Activated T-helper 2 cell treated with anti-CD3 and anti-CD28 coated beads, Interferon-gamma antibody, Interleukin-2, Interleukin-4, amounts not matched to agents 10 μg/mL and 5 μg/mL and 100 μg/mL, durations not matched to agents 14 hours and 24 hours and 36 hours (primary cell): ENCODE measurements at regions of chr19 and their contacts with region 1.

Region 1: GRCh38 chr19:17555480-17555928 is at the start of gene COLGALT1:
- DNase-seq: peak; percentile 96
- H3K4me3 Mint-ChIP-seq: peak within 1 kb of the TSS; percentile 88
- H3K27ac Mint-ChIP-seq: peak within 1 kb of the TSS; percentile 85
- H3K4me1 Mint-ChIP-seq: peaks cover 10% of the 10 kb centered on the region
- H3K27me3 Mint-ChIP-seq: no peaks in the 10 kb centered on the region
- total RNA-seq, gene COLGALT1: 77.0 and 84.3 TPM in 2 replicates

Region 2: GRCh38 chr19:17125715-17126677 is 429.5 kb before region 1 on chr19:
- intact Hi-C with region 1: loop called (anchors 5 kb)
- DNase-seq: peak; percentile 77
- H3K4me3 Mint-ChIP-seq: peak overlapping the region; percentile 83
- H3K27ac Mint-ChIP-seq: peak overlapping the region; percentile 99
- H3K4me1 Mint-ChIP-seq: peaks cover 37% of the 10 kb centered on the region
- H3K27me3 Mint-ChIP-seq: no peaks in the 10 kb centered on the region

Region 3: DNA sequence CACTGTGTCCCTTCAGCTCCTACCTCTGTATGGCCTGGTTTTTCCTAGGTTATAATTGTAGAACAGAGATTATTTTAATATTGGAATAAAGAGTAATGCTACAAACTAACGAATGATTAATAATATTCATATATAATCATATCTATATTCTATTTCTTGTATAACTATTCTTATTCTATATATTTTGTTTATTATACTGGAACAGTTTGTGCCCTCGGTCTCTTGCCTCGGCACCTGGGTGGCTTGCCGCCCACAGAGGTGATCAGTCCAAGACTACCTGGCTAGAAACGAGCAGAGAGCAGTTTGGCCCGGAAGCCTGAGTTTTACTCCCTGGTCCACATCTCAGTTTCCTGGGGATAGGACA is 89.0 kb before region 1 on chr19:
- intact Hi-C with region 1: no loop called
- DNase-seq: no peak
- H3K4me3 Mint-ChIP-seq: no peak overlapping the region
- H3K27ac Mint-ChIP-seq: no peak overlapping the region
- H3K4me1 Mint-ChIP-seq: peaks cover 15% of the 10 kb centered on the region
- H3K27me3 Mint-ChIP-seq: peaks cover 6% of the 10 kb centered on the region

Region 4: DNA sequence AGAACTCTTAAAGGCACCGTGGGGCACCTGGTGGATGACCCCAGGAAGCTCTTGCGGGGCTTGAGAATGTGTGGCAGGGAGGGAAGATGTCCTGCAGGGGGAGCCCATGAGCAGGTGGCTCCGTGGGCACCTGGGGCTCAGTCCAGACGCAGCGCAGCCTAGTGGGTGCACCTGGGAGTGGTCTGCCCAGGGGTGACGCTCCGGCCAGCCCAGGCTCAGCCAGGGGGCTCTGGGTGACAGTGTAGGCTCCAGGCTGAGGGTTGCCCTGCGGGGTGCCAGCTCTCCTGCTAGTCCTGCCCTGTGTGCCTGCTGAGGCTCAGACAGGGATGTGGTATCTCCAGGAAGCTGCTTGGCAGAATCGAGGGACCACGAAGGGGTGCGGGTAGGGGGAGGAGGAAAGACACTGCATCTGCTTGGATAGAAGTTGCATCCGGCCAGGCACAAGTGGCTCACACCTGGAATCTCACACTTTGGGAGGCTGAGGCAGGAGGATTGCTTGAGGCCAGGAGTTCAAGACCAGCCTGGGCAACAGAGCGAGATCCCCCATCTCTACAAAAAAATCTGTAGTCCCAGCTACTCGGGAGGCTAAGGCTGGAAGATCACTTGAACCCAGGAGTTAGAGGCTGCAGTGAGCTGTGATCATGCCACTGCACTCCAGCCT is 59.0 kb before region 1 on chr19:
- intact Hi-C with region 1: loop called (anchors 10 kb)
- DNase-seq: peak; percentile 74
- H3K4me3 Mint-ChIP-seq: no peak overlapping the region
- H3K27ac Mint-ChIP-seq: no peak overlapping the region
- H3K4me1 Mint-ChIP-seq: peaks cover 14% of the 10 kb centered on the region
- H3K27me3 Mint-ChIP-seq: no peaks in the 10 kb centered on the region

Region 5: GRCh38 chr19:17511724-17512573 is 43.6 kb before region 1 on chr19:
- intact Hi-C with region 1: loop called (anchors 1 kb)
- DNase-seq: peak; percentile 80
- H3K4me3 Mint-ChIP-seq: peak overlapping the region; percentile 100
- H3K27ac Mint-ChIP-seq: peak overlapping the region; percentile 74
- H3K4me1 Mint-ChIP-seq: peaks cover 23% of the 10 kb centered on the region
- H3K27me3 Mint-ChIP-seq: no peaks in the 10 kb centered on the region

Region 6: DNA sequence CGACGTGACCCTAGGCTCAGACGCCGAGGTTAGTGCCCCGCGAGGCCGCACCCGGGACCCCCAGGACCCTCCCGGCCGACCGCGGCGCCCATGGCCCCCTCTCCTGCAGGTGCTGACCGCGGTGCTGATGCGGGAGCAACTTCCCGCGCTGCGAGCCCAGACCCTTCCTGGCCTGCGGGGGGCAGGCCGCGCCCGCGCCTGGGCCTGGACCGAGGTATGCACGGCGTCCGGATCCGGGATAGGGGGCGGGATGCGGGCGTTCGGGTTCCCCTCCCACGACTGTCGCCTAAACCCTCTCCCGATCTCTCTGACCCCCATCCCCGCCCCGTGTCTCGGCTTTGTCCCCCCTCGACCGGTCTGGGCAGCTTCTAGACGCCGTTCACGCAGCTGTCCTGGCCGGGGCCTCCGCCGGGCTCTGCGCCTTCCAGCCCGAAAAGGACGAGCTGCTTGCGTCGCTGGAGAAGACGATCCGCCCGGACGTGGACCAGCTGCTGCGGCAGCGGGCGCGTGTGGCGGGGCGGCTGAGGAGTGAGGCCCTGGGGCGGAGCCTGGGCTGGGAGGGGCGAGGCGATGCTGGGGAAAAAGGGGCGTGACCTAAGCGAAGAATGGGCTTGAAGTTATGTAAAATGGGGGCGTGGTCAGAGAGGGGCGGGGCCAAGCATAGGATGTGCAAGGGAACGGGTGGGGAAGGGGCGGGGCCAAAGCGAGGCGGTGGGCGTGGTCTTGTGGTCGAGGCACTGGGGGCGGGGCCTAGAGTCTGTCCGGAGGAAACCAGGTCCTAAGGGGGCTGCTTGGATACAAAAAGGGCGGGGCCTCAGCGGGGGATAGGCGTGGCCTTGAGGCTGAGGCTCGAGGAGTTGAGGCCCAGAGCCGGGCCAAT is 16.0 kb before region 1 on chr19:
- intact Hi-C with region 1: loop called (anchors 1 kb)
- DNase-seq: peak; percentile 96
- H3K4me3 Mint-ChIP-seq: peak overlapping the region; percentile 79
- H3K27ac Mint-ChIP-seq: peak overlapping the region; percentile 2
- H3K4me1 Mint-ChIP-seq: peaks cover 7% of the 10 kb centered on the region
- H3K27me3 Mint-ChIP-seq: peaks cover 10% of the 10 kb centered on the region